WTC11 (cell line): ENCODE measurements at regions of chr1 and their contacts with region 1.

Region 1: DNA sequence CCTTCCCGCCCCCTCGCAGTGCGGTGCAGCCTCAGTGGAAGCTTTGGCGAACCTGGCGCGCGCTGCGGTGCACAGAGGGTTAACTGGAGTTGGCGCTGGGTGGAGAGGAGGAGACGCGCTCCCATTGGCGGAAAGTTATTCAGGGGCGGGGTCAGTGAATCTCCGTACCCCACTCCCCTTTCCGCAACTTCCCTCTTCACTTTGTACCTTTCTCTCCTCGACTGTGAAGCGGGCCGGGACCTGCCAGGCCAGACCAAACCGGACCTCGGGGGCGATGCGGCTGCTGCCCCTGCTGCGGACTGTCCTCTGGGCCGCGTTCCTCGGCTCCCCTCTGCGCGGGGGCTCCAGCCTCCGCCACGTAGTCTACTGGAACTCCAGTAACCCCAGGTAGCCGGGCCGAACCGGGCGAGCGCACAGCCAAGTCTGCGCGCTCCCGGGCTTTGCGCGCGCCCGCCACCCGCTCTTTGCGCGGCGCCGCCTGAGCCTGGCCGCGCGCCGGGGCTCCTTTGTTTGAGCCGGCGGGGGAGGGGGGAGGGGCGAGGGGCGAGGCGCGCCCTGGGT is at the start of gene EFNA4:
- DNase-seq: peak; percentile 93
- ATAC-seq: peak; percentile 74
- H3K4me3 Mint-ChIP-seq: peak within 1 kb of the TSS; percentile 91
- H3K27ac Mint-ChIP-seq: peak within 1 kb of the TSS; percentile 98
- H3K4me1 Mint-ChIP-seq: peaks cover 19% of the 10 kb centered on the region
- H3K27me3 Mint-ChIP-seq: no peaks in the 10 kb centered on the region
- CTCF ChIP-seq: no peak
- total RNA-seq, gene EFNA4: 19.5 to 22.7 TPM (median 22.3 TPM) in 3 replicates

Region 2: GRCh38 chr1:154974063-154974807 is 89.4 kb before region 1 on chr1 and contains the start of gene CKS1B:
- CTCF ChIA-PET with region 1: interaction called, 20 read pairs
- POLR2A ChIA-PET with region 1: interaction called, 6 read pairs
- DNase-seq: peak; percentile 96
- ATAC-seq: peak; percentile 62
- H3K4me3 Mint-ChIP-seq: no peak within 1 kb of the TSS
- H3K27ac Mint-ChIP-seq: no peak within 1 kb of the TSS
- H3K4me1 Mint-ChIP-seq: peaks cover 28% of the 10 kb centered on the region
- H3K27me3 Mint-ChIP-seq: no peaks in the 10 kb centered on the region
- CTCF ChIP-seq: no peak
- total RNA-seq, gene CKS1B: 258 to 301 TPM (median 278 TPM) in 3 replicates

Region 3: GRCh38 chr1:155001675-155002463 is 61.8 kb before region 1 on chr1:
- CTCF ChIA-PET with region 1: interaction called, 28 read pairs
- POLR2A ChIA-PET with region 1: interaction called, 6 read pairs
- DNase-seq: peak; percentile 100
- ATAC-seq: peak; percentile 73
- H3K4me3 Mint-ChIP-seq: peak overlapping the region; percentile 88
- H3K27ac Mint-ChIP-seq: peak overlapping the region; percentile 57; the same call in 1 of the 2 replicates
- H3K4me1 Mint-ChIP-seq: peaks cover 39% of the 10 kb centered on the region
- H3K27me3 Mint-ChIP-seq: no peaks in the 10 kb centered on the region; the same call in 1 of the 2 replicates
- CTCF ChIP-seq: no peak

Region 4: DNA sequence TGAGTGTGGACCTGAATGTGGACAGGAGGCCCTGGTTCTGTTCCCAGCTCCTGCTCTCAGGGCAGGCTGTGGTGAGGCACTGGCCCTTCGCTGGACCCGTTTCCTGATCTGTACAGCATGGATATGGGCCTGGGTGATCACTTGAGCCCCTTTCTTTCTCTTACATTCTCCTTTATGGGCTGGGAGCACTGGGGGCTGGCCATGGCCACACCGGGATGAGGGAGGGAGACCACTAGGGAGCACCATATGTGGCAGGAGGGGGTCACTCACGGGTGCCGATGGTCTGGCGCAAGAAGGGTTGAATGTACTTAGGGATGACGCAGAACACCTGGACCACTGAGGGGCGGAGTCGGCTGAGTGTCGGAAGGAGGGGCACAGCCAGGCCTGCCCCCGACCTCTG is 32.7 kb before region 1 on chr1:
- CTCF ChIA-PET with region 1: interaction called, 13 read pairs
- POLR2A ChIA-PET with region 1: no interaction called
- DNase-seq: no peak
- ATAC-seq: no peak; the same call in 1 of the 2 replicates
- H3K4me3 Mint-ChIP-seq: no peak overlapping the region
- H3K27ac Mint-ChIP-seq: no peak overlapping the region
- H3K4me1 Mint-ChIP-seq: no peaks in the 10 kb centered on the region
- H3K27me3 Mint-ChIP-seq: peaks cover 3% of the 10 kb centered on the region; the same call in 1 of the 2 replicates
- CTCF ChIP-seq: no peak

Region 5: GRCh38 chr1:155078469-155079209 is 15.0 kb after region 1 on chr1 and contains the start of gene EFNA3:
- CTCF ChIA-PET with region 1: interaction called, 109 read pairs
- POLR2A ChIA-PET with region 1: interaction called, 8 read pairs
- DNase-seq: peak; percentile 84
- ATAC-seq: peak; percentile 38
- H3K4me3 Mint-ChIP-seq: peak within 1 kb of the TSS; percentile 76
- H3K27ac Mint-ChIP-seq: no peak within 1 kb of the TSS
- H3K4me1 Mint-ChIP-seq: peaks cover 25% of the 10 kb centered on the region
- H3K27me3 Mint-ChIP-seq: peaks cover 84% of the 10 kb centered on the region
- CTCF ChIP-seq: no peak
- total RNA-seq, gene EFNA3: 12.5 to 15.4 TPM (median 15.4 TPM) in 3 replicates

Region 6: DNA sequence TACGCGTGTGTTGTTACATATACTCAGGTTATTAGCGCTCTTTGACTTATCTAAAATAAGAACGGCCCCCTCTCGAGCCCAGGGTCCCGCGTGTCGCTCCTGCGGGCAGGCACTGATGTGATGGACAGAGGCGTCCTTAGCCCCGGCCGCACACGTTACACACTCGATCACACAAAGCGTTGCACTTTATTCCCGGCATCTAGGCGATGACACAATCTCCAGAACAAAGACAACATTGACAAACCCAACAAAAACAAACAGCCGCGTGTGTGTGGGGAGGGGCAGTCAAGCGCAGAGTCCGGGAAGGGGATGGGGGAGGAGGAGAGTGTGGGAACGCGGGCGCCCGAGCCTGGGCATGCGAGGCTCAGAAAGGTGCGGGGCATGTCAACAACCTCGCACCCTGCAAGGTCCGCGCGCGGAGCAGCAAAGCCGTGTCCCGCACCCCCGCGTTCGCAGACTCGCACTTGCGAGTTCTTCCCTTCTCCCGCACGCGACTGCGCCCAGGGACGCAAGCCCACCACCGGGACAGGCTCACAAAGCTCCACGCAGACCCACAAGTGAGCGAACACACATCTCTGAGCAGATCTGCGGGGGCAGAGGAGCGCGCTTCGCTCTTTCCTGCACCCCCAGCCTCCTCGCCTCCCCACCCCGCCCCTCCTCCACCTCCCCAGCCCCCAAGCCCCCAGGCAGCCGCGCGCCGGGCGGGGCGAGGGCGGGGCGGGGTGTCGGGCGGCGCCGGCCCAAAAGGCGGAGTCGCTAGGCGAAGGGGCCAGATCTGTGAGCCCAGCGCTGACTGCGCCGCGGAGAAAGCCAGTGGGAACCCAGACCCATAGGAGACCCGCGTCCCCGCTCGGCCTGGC is 63.7 kb after region 1 on chr1 and contains the start of gene EFNA1:
- CTCF ChIA-PET with region 1: interaction called, 10 read pairs
- POLR2A ChIA-PET with region 1: no interaction called
- DNase-seq: peak; percentile 61
- ATAC-seq: peak; percentile 24
- H3K4me3 Mint-ChIP-seq: peak within 1 kb of the TSS; percentile 90
- H3K27ac Mint-ChIP-seq: no peak within 1 kb of the TSS; the same call in 1 of the 2 replicates
- H3K4me1 Mint-ChIP-seq: peaks cover 55% of the 10 kb centered on the region
- H3K27me3 Mint-ChIP-seq: peaks cover 55% of the 10 kb centered on the region
- CTCF ChIP-seq: no peak
- total RNA-seq, gene EFNA1: 6.0 to 7.3 TPM (median 6.5 TPM) in 3 replicates